ENCODE measurements at regions of chr19 and their contacts with region 1.

Region 1: DNA sequence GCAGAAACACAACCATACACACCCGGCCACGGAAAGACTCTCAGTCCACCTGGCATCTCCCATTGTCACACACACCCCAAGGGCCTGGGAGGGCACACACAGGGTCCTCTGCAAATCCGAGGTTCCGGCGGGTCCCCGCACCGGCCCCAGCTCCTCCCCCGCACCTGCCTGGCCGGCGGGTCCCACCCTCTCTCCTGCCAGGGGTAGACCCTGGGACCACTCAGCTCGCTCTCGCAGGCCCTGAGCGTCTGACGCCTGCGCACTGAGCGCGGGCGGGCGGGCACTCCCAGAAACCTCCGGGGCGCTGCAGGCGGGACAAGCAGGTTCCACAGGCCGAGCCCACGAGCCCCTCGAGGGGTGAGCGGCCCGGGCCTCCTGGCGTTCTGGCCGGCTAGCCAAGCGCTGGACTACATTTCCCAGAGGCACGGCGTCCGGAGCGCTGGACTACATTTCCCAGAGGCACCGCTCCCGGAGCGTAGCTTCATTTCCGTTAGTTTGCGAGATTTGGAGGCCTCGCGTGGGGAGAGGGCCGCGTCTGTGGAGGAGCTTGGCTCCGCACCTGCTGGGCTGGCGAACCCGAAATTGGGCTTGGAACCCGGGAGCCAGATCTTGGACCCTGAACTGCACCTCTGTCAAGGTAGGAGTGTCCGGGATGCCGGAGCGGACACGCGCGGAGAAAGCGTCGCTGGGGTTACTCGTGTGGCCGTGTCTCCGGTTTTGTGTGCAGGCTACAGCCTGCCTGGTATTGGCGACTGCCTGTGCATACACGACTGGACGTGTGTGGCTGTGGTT is at the start of gene ZNF420:
- DNase-seq: peak; percentile 64 to 89 (median 84)
- ATAC-seq: peak; percentile 98
- H3K4me3 ChIP-seq: peak within 1 kb of the TSS; percentile 92
- H3K4me3 Mint-ChIP-seq: peak within 1 kb of the TSS; percentile 90 to 100 (median 96)
- H3K27ac ChIP-seq: peak within 1 kb of the TSS; percentile 82
- H3K27ac Mint-ChIP-seq: peak within 1 kb of the TSS; percentile 70 to 99 (median 94)
- H3K4me1 ChIP-seq: peaks cover 11 to 19% of the 10 kb centered on the region in 2 donors
- H3K4me1 Mint-ChIP-seq: peaks cover 16 to 43% (median 34%) of the 10 kb centered on the region in 7 donors
- H3K27me3 ChIP-seq: no peaks in the 10 kb centered on the region
- H3K27me3 Mint-ChIP-seq: no peaks in the 10 kb centered on the region
- total RNA-seq, gene ZNF420: 10.8 to 34.9 (median 15.9) TPM

Region 2: DNA sequence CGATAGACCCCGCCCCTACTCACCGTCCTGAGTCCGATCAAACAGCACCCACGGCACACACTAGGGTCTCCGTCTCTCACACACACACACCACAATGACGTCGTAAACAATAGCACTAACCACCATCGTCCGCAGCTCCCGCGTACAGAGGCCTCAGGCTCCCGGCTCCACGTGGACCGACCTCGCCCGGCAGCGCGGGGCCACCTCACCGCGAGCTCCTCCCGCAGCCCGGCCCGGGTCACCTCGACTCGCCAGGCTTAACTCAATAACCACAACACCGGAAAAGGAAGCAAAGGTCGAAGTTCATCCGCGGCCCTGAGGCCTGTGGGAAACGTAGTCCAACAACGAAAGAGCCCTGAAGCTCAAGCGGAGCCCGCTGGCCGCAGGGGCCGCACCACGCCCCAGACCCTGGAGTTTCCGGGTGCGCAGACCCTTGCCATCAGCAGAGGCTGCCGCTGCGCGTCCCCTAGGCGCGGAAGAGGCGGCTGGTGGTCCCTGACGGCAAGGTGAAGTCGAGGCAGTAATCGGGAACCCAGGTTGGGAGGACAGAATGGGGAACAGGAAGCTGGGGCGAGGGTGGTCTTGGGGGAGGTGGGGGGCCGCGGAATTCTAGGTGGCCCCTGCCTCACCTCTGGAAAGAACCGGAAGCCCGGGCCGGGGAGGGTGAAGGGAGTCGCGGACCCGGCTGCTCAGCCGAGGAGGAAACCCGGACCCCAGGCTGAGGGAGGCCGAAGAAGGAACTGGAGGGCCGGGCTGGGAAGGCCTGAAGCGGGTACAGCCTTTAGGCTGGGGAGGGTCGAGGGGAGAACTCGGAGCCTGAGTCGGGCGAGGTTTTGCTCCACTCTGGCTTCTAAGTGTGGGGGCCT is 504.9 kb before region 1 on chr19 and contains the start of gene ZNF529:
- CTCF ChIA-PET with region 1: no interaction called
- POLR2A ChIA-PET with region 1: no interaction called
- intact Hi-C with region 1: loop called (anchors 1 kb)
- DNase-seq: peak; percentile 67 to 95 (median 85)
- ATAC-seq: peak; percentile 95
- H3K4me3 ChIP-seq: peak within 1 kb of the TSS; percentile 95
- H3K4me3 Mint-ChIP-seq: peak within 1 kb of the TSS; percentile 80 to 100 (median 93)
- H3K27ac ChIP-seq: peak within 1 kb of the TSS; percentile 98
- H3K27ac Mint-ChIP-seq: peak within 1 kb of the TSS; percentile 94 to 100 (median 98)
- H3K4me1 ChIP-seq: peaks cover 0 to 15% of the 10 kb centered on the region in 2 donors
- H3K4me1 Mint-ChIP-seq: peaks cover 23 to 46% (median 40%) of the 10 kb centered on the region in 7 donors
- H3K27me3 ChIP-seq: no peaks in the 10 kb centered on the region
- H3K27me3 Mint-ChIP-seq: no peaks in the 10 kb centered on the region
- total RNA-seq, gene ZNF529: 22.6 to 37.8 (median 33.8) TPM

Region 3: DNA sequence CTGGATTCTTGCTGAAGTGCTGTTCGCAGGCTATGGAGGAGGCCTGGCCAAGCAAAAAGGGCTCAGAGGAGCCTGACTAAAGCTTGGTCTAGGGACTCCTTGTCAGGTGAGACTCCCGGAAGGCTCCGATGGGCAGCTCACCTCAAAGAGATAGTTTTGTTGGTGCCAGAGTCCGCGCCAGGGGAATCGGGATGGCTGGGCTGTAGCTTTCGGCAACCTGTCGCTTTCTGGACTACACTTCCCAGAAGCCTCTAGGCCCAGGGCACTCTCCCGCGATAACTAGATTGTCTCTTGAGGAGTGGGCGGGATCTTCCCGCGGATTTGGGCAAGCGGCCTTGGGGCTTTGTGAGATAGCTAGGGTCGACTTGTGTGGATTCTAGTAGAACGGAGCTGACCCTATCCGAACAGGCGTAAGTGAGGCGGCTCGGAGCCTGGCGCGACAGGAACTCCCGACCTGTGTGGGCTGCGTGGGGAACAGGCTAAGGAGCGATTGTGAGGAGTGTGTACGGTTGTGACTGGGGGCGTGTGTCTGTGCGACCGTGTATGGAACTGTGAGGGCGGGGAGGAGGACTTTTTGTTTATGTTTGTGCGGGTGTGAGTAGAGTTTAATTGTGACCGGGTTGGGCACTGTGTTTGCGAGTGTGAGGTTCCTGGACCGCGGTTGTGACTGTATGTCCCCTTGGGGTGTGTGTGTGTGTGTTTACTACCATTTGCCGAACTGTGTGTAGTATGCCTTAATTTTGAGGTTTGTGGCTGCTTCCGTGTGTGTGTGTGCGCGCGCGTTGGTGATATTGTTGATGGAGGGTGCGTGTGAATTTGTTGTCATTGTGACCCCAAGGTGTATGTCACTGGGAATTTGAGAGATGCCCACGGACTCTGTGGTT is 227.3 kb before region 1 on chr19 and contains the start of gene ZNF345:
- CTCF ChIA-PET with region 1: no interaction called
- POLR2A ChIA-PET with region 1: interaction called, 3 read pairs
- intact Hi-C with region 1: loop called (anchors 1 to 2 kb)
- DNase-seq: peak; percentile 62 to 91 (median 88)
- ATAC-seq: peak; percentile 93
- H3K4me3 ChIP-seq: peak within 1 kb of the TSS; percentile 92
- H3K4me3 Mint-ChIP-seq: no peak within 1 kb of the TSS
- H3K27ac ChIP-seq: peak within 1 kb of the TSS; percentile 86
- H3K27ac Mint-ChIP-seq: no peak within 1 kb of the TSS
- H3K4me1 ChIP-seq: peaks cover 9 to 16% of the 10 kb centered on the region in 2 donors
- H3K4me1 Mint-ChIP-seq: peaks cover 0 to 22% (median 13%) of the 10 kb centered on the region in 7 donors
- H3K27me3 ChIP-seq: no peaks in the 10 kb centered on the region
- H3K27me3 Mint-ChIP-seq: no peaks in the 10 kb centered on the region
- total RNA-seq, gene ZNF345: 6.8 to 18.2 (median 7.8) TPM

Region 4: GRCh38 chr19:36997152-36997842 is 80.8 kb before region 1 on chr19:
- CTCF ChIA-PET with region 1: no interaction called
- POLR2A ChIA-PET with region 1: no interaction called
- intact Hi-C with region 1: no loop called
- DNase-seq: no peak
- ATAC-seq: no peak
- H3K4me3 ChIP-seq: no peak overlapping the region
- H3K4me3 Mint-ChIP-seq: no peak overlapping the region
- H3K27ac ChIP-seq: no peak overlapping the region
- H3K27ac Mint-ChIP-seq: no peak overlapping the region
- H3K4me1 ChIP-seq: no peaks in the 10 kb centered on the region
- H3K4me1 Mint-ChIP-seq: no peaks in the 10 kb centered on the region
- H3K27me3 ChIP-seq: no peaks in the 10 kb centered on the region
- H3K27me3 Mint-ChIP-seq: no peaks in the 10 kb centered on the region

Region 5: GRCh38 chr19:37370880-37371661 is 292.9 kb after region 1 on chr19 and contains the start of gene ZNF527:
- CTCF ChIA-PET with region 1: no interaction called
- POLR2A ChIA-PET with region 1: interaction called, 4 read pairs
- intact Hi-C with region 1: loop called (anchors 1 kb)
- DNase-seq: peak; percentile 92 to 97 (median 96)
- ATAC-seq: peak; percentile 96
- H3K4me3 ChIP-seq: peak within 1 kb of the TSS; percentile 85
- H3K4me3 Mint-ChIP-seq: peak within 1 kb of the TSS; percentile 92 to 100 (median 98)
- H3K27ac ChIP-seq: peak within 1 kb of the TSS; percentile 74
- H3K27ac Mint-ChIP-seq: peak within 1 kb of the TSS; percentile 87 to 99 (median 97)
- H3K4me1 ChIP-seq: peaks cover 0 to 8% of the 10 kb centered on the region in 2 donors
- H3K4me1 Mint-ChIP-seq: peaks cover 7 to 25% (median 17%) of the 10 kb centered on the region in 7 donors
- H3K27me3 ChIP-seq: no peaks in the 10 kb centered on the region
- H3K27me3 Mint-ChIP-seq: no peaks in the 10 kb centered on the region
- total RNA-seq, gene ZNF527: 5.6 to 13.6 (median 13.2) TPM

Region 6: DNA sequence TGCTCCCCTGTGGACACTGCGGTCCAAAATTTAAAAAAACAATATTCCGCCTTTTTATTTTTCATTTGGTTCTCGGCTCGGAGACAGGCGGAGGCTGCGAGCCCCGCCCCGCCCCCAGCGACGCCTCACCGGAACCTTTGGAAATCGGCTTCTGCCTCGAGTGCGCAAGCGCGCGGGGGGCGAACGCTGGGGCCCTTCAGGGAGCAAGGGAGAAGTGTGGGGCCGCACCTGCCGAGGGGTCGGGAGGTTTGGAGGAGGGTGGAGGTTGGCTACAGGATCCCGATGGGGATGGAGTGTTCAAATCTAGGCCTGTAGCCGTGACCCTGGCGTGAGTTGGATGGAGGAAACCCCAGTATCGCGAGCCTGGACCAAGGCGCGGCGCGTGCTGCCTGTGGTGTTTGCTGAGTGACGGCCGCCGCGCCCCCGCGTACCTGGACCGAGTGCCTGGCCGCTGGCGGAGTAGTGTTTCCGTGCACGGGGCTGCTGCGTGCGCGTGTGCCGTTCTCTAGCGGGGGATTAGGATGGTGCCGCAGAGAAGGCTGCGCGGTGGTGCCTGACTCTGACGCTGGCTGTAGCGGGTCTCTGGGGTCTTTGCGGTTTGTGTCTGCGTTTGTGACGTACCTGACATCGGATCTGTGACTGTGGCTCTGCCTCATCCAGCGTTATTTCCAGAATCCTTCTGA is 577.7 kb after region 1 on chr19:
- CTCF ChIA-PET with region 1: no interaction called
- POLR2A ChIA-PET with region 1: no interaction called
- intact Hi-C with region 1: loop called in 1 of 2 experiments (anchors 5 kb)
- DNase-seq: peak; percentile 74 to 90 (median 86)
- ATAC-seq: peak; percentile 86
- H3K4me3 ChIP-seq: peak overlapping the region; percentile 95
- H3K4me3 Mint-ChIP-seq: peak overlapping the region; percentile 82 to 99 (median 96)
- H3K27ac ChIP-seq: peak overlapping the region; percentile 89
- H3K27ac Mint-ChIP-seq: peak overlapping the region; percentile 81 to 99 (median 97)
- H3K4me1 ChIP-seq: peaks cover 8 to 16% of the 10 kb centered on the region in 2 donors
- H3K4me1 Mint-ChIP-seq: peaks cover 28 to 40% (median 33%) of the 10 kb centered on the region in 7 donors
- H3K27me3 ChIP-seq: no peaks in the 10 kb centered on the region
- H3K27me3 Mint-ChIP-seq: peaks cover 0 to 3% (median 0%) of the 10 kb centered on the region in 5 donors